HAP-1 (cell line): ENCODE measurements at regions of chr1 and their contacts with region 1.

Region 1: GRCh38 chr1:116485071-116485735 is 85.6 kb downstream of the CD58 start:
- DNase-seq: peak; percentile 87 to 95
- H3K4me3 ChIP-seq: no peak overlapping the region
- H3K4me1 ChIP-seq: peaks cover 21% of the 10 kb centered on the region
- H3K27me3 ChIP-seq: no peaks in the 10 kb centered on the region

Region 2: DNA sequence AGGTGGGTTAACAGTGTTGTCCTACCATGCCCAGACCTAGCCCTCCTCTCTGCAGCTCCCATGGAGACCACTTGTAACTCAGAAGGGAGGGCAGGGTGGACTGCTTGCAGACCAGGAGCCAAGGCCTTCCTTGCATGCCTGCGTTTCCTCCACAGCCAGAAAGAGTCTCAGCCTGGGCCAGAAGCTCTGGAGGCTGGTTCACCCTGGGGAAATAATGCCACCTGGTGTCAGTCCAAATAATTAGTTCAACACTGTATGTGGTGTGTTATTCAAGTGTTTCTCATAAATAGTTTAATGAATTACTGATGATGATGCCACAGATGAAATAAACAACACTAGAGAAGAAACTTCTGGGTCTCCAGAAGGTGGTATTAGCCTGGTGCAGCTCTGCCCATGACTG is 860.3 kb before region 1 on chr1:
- in situ Hi-C with region 1: loop called (anchors 25 kb)
- DNase-seq: no peak
- H3K4me3 ChIP-seq: no peak overlapping the region
- H3K4me1 ChIP-seq: no peaks in the 10 kb centered on the region
- H3K27me3 ChIP-seq: no peaks in the 10 kb centered on the region

Region 3: DNA sequence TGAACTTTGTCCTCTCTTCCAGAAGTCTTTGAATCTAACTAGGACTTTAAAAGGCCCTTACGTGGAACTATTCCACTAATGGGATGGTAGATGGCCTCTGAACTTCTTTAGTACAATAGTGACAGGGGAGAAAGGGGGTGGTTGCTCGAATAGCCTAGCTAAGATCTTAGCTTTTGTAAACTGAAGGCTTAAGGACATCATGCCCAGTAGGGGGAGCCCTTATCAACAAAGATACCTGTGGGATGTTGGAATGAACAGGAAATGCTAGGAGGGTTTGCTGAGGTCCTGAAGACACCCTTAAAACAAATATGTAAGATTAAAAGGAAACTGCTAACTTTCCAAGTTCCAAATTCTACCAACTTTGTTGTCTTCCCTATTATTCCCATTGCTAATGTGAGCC is 677.5 kb before region 1 on chr1:
- in situ Hi-C with region 1: loop called (anchors 25 kb)
- DNase-seq: peak; percentile 66 to 83
- H3K4me3 ChIP-seq: no peak overlapping the region
- H3K4me1 ChIP-seq: no peaks in the 10 kb centered on the region
- H3K27me3 ChIP-seq: no peaks in the 10 kb centered on the region

Region 4: GRCh38 chr1:116133696-116134650 is 351.2 kb before region 1 on chr1:
- in situ Hi-C with region 1: loop called (anchors 5 kb)
- DNase-seq: peak in 1 of 2 experiments; percentile 31
- H3K4me3 ChIP-seq: no peak overlapping the region
- H3K4me1 ChIP-seq: no peaks in the 10 kb centered on the region; the same call in 1 of the 2 replicates
- H3K27me3 ChIP-seq: no peaks in the 10 kb centered on the region

Region 5: GRCh38 chr1:116951200-116951935 is 466.2 kb after region 1 on chr1:
- in situ Hi-C with region 1: no loop called
- DNase-seq: no peak
- H3K4me3 ChIP-seq: no peak overlapping the region
- H3K4me1 ChIP-seq: peaks cover 73% of the 10 kb centered on the region
- H3K27me3 ChIP-seq: no peaks in the 10 kb centered on the region